K562 (cell line): ENCODE measurements at regions of chr22 and their contacts with region 1.

Region 1: GRCh38 chr22:26589845-26590736 is at the start of gene TPST2:
- DNase-seq: peak; percentile 80 to 93 (median 88)
- ATAC-seq: peak; percentile 86
- H3K4me3 ChIP-seq: peak within 1 kb of the TSS; percentile 93
- H3K27ac ChIP-seq: peak within 1 kb of the TSS; percentile 88
- H3K4me1 ChIP-seq: peaks cover 24 to 25% of the 10 kb centered on the region in 2 experiments
- H3K27me3 ChIP-seq: no peaks in the 10 kb centered on the region
- CTCF ChIP-seq: no peak
- EP300 ChIP-seq: no peak
- POLR2A ChIP-seq: peak; percentile 64
- RAD21 ChIP-seq: no peak
- polyA plus RNA-seq, gene TPST2: 14.2 to 18.2 TPM

Region 2: DNA sequence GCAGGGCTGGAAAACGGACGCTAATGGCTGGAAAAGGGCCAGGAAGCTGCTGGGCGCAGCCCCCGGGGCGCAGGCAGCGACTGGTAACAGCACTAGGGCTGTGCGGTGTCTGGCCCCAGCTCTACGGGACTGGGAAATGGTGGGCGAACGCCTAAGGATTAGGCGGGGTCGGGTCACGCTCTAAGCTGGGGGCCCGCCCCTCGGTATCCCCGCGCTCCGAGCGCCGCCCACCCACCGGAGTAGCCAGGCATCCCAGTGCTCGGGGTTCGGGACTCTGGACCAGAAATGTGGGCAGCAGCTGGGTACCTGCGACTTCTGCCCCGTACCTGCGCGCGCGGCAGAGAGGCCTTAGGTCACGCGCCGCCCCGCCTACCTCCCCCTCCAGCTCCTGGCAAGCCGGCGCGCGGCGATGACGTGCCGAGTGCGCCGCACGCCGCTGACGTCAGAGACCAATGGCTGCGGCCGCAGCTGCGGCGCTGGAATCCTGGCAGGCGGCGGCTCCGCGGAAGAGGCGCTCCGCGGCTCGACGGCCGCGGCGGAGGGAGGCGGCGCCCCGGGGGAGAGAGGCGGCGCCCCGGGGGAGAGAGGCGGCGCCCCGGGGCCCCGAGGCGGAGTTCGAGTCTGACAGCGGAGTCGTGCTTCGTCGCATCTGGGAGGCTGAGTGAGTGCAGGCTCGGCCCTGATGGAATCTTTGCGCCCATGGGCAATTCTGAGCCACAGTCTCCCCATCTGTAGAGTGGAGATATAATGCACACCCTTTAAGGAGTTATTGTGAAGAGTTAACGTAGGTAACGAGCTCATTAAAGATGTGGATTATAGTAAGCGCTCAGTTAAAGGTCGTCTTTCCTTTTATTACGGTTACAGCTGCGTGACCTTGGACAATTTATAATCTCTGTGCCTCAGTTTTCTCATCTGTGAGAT is 106.4 kb before region 1 on chr22 and contains the starts of genes HPS4 and SRRD:
- CTCF ChIA-PET with region 1: no interaction called
- POLR2A ChIA-PET with region 1: no interaction called
- in situ Hi-C with region 1: no loop called
- intact Hi-C with region 1: loop called (anchors 10 kb)
- DNase-seq: peak; percentile 87 to 93 (median 88)
- ATAC-seq: peak; percentile 74
- H3K4me3 ChIP-seq: peak within 1 kb of the TSS; percentile 89
- H3K27ac ChIP-seq: peak within 1 kb of the TSS; percentile 86
- H3K4me1 ChIP-seq: peaks cover 14 to 39% of the 10 kb centered on the region in 2 experiments; a peak in 4 of 5 replicates
- H3K27me3 ChIP-seq: no peaks in the 10 kb centered on the region
- CTCF ChIP-seq: no peak
- EP300 ChIP-seq: no peak
- POLR2A ChIP-seq: peak; percentile 80
- RAD21 ChIP-seq: no peak
- polyA plus RNA-seq, gene HPS4: 12.8 to 23.7 TPM
- polyA plus RNA-seq, gene SRRD: 4.9 to 5.7 TPM